ENCODE measurements at regions of chr1 and their contacts with region 1.

Region 1: DNA sequence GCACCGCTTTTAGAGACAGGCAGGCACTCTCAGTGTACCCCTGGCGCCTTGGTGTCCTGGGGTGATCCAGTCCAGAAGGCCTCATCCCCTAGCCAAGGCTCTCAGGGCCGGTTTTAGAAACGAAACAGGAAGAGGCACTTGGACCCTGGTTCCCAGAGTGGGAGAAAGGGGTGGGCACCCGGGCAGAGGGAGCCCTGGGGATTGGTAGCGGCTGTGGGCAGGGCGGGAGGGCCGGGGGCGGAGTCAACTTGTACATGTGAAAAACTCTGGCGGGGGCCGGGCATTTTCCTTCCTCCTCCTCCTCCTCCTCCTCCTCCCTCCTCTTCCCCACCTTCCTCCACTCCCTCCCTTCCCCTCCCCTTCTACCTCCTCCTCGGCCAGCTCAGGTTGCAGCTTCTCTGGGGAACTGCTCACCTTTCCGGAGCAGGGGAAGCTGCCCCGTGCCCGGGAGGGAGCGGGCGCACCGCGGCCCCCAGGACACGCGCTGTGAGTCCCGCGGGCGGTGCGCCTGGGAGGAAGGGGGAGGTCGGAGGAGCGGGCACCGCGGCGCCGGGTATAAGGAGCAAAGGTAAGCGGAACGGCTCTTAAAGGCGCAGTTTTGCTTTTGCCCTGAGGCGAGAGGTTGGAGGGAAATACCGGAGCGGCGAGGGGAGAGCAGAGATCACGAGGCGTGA is at the start of gene CDK18:
- DNase-seq: peak; percentile 71 to 78
- H3K4me3 ChIP-seq: peak within 1 kb of the TSS; percentile 88
- H3K27ac ChIP-seq: peak within 1 kb of the TSS; percentile 31
- H3K4me1 ChIP-seq: peaks cover 14% of the 10 kb centered on the region
- H3K27me3 ChIP-seq: no peaks in the 10 kb centered on the region
- CTCF ChIP-seq: no peak
- total RNA-seq, gene CDK18: 35.3 and 36.2 TPM in 2 replicates

Region 2: GRCh38 chr1:204746838-204747442 is 757.5 kb before region 1 on chr1:
- CTCF ChIA-PET with region 1: interaction called, 17 read pairs
- POLR2A ChIA-PET with region 1: no interaction called
- intact Hi-C with region 1: no loop called
- DNase-seq: peak in 1 of 2 experiments; percentile 51
- H3K4me3 ChIP-seq: no peak overlapping the region
- H3K27ac ChIP-seq: no peak overlapping the region
- H3K4me1 ChIP-seq: peaks cover 8% of the 10 kb centered on the region; the same call in 1 of the 2 replicates
- H3K27me3 ChIP-seq: peaks cover 2% of the 10 kb centered on the region; the same call in 1 of the 2 replicates
- CTCF ChIP-seq: peak; percentile 94

Region 3: GRCh38 chr1:205569411-205570172 is 65.1 kb after region 1 on chr1:
- CTCF ChIA-PET with region 1: no interaction called
- POLR2A ChIA-PET with region 1: interaction called, 19 read pairs
- intact Hi-C with region 1: no loop called
- DNase-seq: peak in 1 of 2 experiments; percentile 42
- H3K4me3 ChIP-seq: peak overlapping the region; percentile 61; the same call in 1 of the 2 replicates
- H3K27ac ChIP-seq: no peak overlapping the region
- H3K4me1 ChIP-seq: peaks cover 8% of the 10 kb centered on the region
- H3K27me3 ChIP-seq: no peaks in the 10 kb centered on the region; the same call in 1 of the 2 replicates
- CTCF ChIP-seq: no peak

Region 4: GRCh38 chr1:205680073-205680851 is 175.8 kb after region 1 on chr1 and contains the start of gene SLC45A3:
- CTCF ChIA-PET with region 1: no interaction called
- POLR2A ChIA-PET with region 1: no interaction called
- intact Hi-C with region 1: no loop called
- DNase-seq: peak; percentile 46 to 55
- H3K4me3 ChIP-seq: peak within 1 kb of the TSS; percentile 63
- H3K27ac ChIP-seq: peak within 1 kb of the TSS; percentile 51
- H3K4me1 ChIP-seq: peaks cover 37% of the 10 kb centered on the region
- H3K27me3 ChIP-seq: no peaks in the 10 kb centered on the region
- CTCF ChIP-seq: no peak
- total RNA-seq, gene SLC45A3: 15.2 and 19.9 TPM in 2 replicates